H1 (cell line): ENCODE measurements at regions of chr3 and their contacts with region 1.

Region 1: DNA sequence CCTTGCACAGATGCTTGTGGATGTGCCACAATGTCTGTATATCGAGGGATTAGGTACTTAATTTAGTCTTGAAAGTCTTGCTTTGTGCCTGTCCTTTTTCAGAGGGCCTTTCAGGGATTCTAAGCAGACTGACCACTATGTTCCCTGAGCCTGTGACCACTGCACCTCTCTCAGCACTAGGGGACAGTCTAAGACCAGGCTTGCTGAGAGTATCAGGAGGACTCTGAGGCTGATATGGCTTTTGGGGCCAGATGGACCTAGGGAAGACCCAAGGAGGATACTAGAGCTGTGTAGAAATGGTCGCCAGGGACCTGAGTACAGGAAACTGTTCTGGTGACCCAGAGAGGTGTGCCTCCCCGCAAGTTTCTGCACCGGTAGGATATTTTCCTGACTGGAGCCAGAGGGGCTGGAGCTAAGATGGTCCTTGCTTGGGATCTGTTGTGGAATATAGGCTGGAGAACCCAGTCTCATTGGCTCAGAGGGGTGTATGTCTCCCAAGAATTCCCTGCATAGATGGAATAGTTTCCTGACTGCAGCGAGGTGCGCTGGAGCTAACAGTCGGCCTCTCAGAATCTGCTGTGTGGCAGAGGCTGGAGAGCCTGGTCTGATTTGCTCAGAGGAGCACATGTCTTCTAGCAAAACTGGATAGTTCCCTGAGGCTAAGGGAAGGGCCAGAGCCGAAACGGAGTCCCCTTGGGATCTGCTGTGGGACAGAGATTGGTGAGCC is 213.2 kb upstream of the DCBLD2 start:
- DNase-seq: peak; percentile 41 to 52
- H3K4me3 ChIP-seq: no peak overlapping the region
- H3K27ac ChIP-seq: no peak overlapping the region
- H3K4me1 ChIP-seq: no peaks in the 10 kb centered on the region
- H3K27me3 ChIP-seq: no peaks in the 10 kb centered on the region
- CTCF ChIP-seq: peak; percentile 79 to 96 (median 91)
- EP300 ChIP-seq: no peak
- POLR2A ChIP-seq: no peak
- RAD21 ChIP-seq: peak; percentile 99

Region 2: DNA sequence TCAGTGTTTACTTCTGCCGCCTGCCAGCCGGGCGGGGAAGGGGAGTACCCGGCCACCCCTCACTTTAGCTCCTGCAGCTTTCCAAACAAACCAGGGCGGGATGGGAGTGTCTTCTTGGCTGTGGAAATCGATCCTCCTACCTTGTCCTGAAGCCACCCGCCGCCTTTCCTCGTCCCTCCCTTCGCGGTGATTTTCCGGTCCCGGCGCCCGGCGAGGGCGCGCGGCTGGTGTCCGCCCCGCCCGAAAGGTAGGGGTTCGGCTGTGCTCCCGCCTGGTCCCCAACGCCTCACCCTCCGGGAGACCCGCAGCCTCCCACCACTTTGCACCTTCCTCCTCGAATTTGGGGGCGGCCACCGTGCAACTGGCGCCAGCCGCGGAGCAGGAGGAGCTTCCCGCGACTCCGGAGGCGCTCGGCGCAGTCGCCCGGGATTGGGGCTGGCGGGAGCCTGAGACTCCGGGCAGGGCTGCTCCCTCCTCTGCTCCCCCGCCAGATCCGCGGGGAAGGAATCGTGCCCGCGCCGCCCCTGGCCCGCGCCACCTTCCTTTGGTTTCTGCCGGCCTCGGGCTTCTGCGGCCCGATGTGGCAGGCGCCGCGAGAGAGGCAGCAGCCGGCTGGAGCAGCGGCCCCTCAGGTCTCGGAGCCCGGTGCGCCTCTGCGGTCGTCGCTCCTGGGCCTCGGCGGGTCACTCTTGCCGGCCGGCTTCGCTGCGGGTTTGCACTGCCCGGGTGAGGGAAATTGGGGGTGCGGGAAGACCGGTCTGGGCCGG is 382.3 kb before region 1 on chr3:
- CTCF ChIA-PET with region 1: no interaction called
- POLR2A ChIA-PET with region 1: no interaction called
- DNase-seq: peak; percentile 31 to 84
- H3K4me3 ChIP-seq: peak overlapping the region; percentile 68 to 85 (median 73)
- H3K27ac ChIP-seq: peak overlapping the region; percentile 37; the same call in 1 of the 2 replicates
- H3K4me1 ChIP-seq: peaks cover 0 to 8% (median 0%) of the 10 kb centered on the region in 4 experiments; a peak in 2 of 7 replicates
- H3K27me3 ChIP-seq: peaks cover 0 to 8% (median 3%) of the 10 kb centered on the region in 4 experiments; a peak in 4 of 7 replicates
- CTCF ChIP-seq: no peak
- EP300 ChIP-seq: no peak
- POLR2A ChIP-seq: peak in 1 of 2 experiments; percentile 35; a peak in 1 of 3 replicates
- RAD21 ChIP-seq: 0 out of 4 replicates have a peak, but pooled peaks of 1 of the 2 experiments have one; percentile 1

Region 3: DNA sequence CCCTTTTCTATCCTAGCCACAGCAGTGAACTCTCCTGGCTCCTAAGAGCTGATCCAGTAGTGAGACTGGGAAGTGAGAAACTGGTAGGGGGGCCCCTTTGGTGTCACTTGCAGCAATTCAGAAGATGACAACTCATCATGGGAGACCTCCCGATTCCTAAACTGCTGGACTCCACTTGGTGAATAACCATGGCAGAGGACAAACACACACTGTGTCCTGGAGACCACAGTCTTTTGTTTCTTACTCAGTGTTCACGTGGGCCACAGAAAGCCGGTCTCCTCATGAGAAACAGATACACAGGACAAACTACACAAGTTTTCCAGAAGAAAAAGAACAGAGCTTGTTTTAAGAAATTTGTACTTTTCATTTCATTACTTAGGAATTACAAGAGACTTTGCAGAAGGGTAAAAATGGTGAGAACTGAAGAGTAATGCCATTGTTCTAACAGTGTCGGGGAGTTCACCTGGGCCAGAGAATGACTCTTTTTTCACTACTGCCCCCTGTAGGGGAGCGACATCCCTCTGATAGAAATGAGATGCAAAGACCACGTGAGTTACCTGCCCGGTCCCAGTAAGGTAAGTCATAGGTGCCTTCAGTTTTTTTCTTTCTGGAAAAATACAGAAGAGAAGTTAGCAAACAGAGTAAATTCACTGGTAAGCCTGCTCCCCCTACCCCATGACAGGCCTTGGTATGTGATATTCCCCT is 313.5 kb before region 1 on chr3:
- CTCF ChIA-PET with region 1: no interaction called
- POLR2A ChIA-PET with region 1: no interaction called
- DNase-seq: peak in 1 of 2 experiments; percentile 56
- H3K4me3 ChIP-seq: no peak overlapping the region
- H3K27ac ChIP-seq: no peak overlapping the region
- H3K4me1 ChIP-seq: no peaks in the 10 kb centered on the region
- H3K27me3 ChIP-seq: no peaks in the 10 kb centered on the region
- CTCF ChIP-seq: peak; percentile 36 to 57 (median 40); a peak in 3 of 4 replicates
- EP300 ChIP-seq: no peak
- POLR2A ChIP-seq: no peak
- RAD21 ChIP-seq: peak; percentile 41 to 45; a peak in 3 of 4 replicates

Region 4: GRCh38 chr3:98874602-98875249 is 240.0 kb before region 1 on chr3:
- CTCF ChIA-PET with region 1: no interaction called
- POLR2A ChIA-PET with region 1: no interaction called
- DNase-seq: no peak
- H3K4me3 ChIP-seq: no peak overlapping the region
- H3K27ac ChIP-seq: no peak overlapping the region
- H3K4me1 ChIP-seq: no peaks in the 10 kb centered on the region
- H3K27me3 ChIP-seq: no peaks in the 10 kb centered on the region
- CTCF ChIP-seq: no peak
- EP300 ChIP-seq: no peak
- POLR2A ChIP-seq: no peak
- RAD21 ChIP-seq: no peak

Region 5: DNA sequence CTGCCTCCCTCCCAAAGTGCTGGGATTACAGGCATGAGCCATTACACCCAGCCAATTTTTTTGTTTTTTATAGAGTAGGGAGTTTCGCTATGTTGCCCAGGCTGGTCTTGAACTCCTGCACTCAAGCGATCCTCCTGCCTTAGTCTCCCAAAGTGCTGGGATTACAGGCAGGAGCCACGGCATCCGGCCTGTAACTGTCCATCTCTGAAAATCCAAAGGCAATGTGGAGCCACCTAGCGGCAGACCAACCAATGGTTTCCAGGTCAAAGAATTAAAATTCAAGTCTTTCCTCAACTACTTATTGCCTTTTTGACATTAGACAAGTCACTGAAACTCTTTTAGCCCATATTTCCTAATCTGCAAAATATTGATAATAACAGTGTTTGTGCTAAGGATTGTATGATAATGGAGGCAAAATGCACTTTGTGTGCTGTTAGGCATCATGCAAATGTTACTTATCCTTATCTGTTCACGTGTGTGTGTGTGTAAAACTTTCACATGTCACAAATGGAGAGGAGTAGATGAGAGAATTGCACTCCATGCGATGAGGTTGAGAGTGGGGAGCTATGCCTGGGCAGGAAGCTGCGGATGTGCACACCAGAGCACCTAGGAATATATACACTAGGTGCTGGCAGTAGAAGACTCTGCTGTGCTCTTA is 572.4 kb after region 1 on chr3:
- CTCF ChIA-PET with region 1: interaction called, 12 read pairs
- POLR2A ChIA-PET with region 1: no interaction called
- DNase-seq: peak in 1 of 2 experiments; percentile 84
- H3K4me3 ChIP-seq: no peak overlapping the region
- H3K27ac ChIP-seq: no peak overlapping the region
- H3K4me1 ChIP-seq: no peaks in the 10 kb centered on the region
- H3K27me3 ChIP-seq: peaks cover 0 to 1% (median 0%) of the 10 kb centered on the region in 4 experiments; a peak in 1 of 7 replicates
- CTCF ChIP-seq: peak; percentile 58 to 75 (median 74)
- EP300 ChIP-seq: no peak
- POLR2A ChIP-seq: no peak
- RAD21 ChIP-seq: peak; percentile 81 to 86